MCF 10A (cell line): ENCODE measurements at regions of chr4 and their contacts with region 1.

Region 1: GRCh38 chr4:1910643-1911042 is 39.5 kb downstream of the NSD2 start:
- DNase-seq: peak; percentile 64
- H3K4me3 Mint-ChIP-seq: no peak overlapping the region
- H3K27ac Mint-ChIP-seq: peak overlapping the region; percentile 3
- H3K4me1 Mint-ChIP-seq: peaks cover 31% of the 10 kb centered on the region
- H3K27me3 Mint-ChIP-seq: no peaks in the 10 kb centered on the region
- CTCF ChIP-seq: peak; percentile 46

Region 2: GRCh38 chr4:1746265-1746691 is 164.4 kb before region 1 on chr4:
- CTCF ChIA-PET with region 1: interaction called, 7 read pairs
- POLR2A ChIA-PET with region 1: no interaction called
- intact Hi-C with region 1: loop called (anchors 2 kb)
- DNase-seq: peak; percentile 64
- H3K4me3 Mint-ChIP-seq: no peak overlapping the region
- H3K27ac Mint-ChIP-seq: no peak overlapping the region
- H3K4me1 Mint-ChIP-seq: no peaks in the 10 kb centered on the region
- H3K27me3 Mint-ChIP-seq: no peaks in the 10 kb centered on the region
- CTCF ChIP-seq: peak; percentile 86

Region 3: GRCh38 chr4:1856042-1856788 is 54.4 kb before region 1 on chr4 and contains the start of gene LETM1:
- CTCF ChIA-PET with region 1: interaction called, 4 read pairs
- POLR2A ChIA-PET with region 1: interaction called, 32 read pairs
- intact Hi-C with region 1: no loop called
- DNase-seq: peak; percentile 93
- H3K4me3 Mint-ChIP-seq: peak within 1 kb of the TSS; percentile 83
- H3K27ac Mint-ChIP-seq: peak within 1 kb of the TSS; percentile 79
- H3K4me1 Mint-ChIP-seq: peaks cover 26% of the 10 kb centered on the region
- H3K27me3 Mint-ChIP-seq: no peaks in the 10 kb centered on the region
- CTCF ChIP-seq: peak; percentile 8
- total RNA-seq, gene LETM1: 85.0 and 86.3 TPM in 2 replicates

Region 4: DNA sequence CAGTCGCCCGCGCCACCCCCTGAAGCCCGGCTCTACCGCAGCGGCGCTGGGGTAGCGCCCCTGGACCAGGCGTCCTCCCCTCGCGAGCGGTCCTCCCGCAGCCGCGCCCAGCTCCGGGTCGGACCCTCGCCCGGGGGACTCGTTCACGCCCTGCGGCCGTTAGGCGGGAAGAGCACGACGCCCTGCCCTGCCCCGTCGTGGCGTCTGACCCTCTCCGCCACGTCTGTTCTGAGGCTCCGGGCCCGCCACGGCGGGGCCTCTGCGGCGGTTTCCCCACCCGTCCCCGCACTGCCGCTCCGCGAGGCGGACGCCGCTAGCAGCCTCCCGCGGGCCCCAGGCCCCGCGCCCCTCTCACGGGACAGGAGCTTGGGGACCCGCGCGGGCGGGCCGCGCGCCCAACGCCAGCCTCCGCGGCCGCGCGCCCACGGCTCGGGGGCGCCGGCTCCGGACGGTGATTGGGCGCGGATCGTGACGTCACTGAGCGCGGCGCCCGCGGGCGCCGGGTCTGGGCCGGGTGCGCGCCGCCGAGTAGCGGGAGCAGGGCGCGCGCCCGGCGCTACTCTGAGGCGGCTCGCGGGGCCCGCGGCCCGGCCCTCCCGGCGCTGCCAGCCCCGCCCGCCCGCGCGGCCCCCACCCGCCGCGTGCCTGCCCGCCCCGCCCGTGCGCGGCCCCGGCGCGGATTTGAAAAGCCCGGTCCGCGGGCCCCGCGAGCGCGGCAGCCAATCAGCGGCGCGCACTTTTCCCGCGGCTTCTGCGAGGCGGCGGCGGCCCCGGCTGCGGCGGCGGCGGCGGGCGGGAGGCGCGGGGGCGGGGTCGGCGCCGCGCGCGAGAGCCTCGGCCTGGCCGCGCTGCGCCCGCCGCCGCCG is 39.8 kb before region 1 on chr4 and contains the start of gene NSD2:
- CTCF ChIA-PET with region 1: interaction called, 7 read pairs
- POLR2A ChIA-PET with region 1: interaction called, 11 read pairs
- intact Hi-C with region 1: no loop called
- DNase-seq: peak; percentile 82
- H3K4me3 Mint-ChIP-seq: peak within 1 kb of the TSS; percentile 88
- H3K27ac Mint-ChIP-seq: peak within 1 kb of the TSS; percentile 82
- H3K4me1 Mint-ChIP-seq: peaks cover 21% of the 10 kb centered on the region
- H3K27me3 Mint-ChIP-seq: no peaks in the 10 kb centered on the region
- CTCF ChIP-seq: no peak
- total RNA-seq, gene NSD2: 100 and 109 TPM in 2 replicates

Region 5: DNA sequence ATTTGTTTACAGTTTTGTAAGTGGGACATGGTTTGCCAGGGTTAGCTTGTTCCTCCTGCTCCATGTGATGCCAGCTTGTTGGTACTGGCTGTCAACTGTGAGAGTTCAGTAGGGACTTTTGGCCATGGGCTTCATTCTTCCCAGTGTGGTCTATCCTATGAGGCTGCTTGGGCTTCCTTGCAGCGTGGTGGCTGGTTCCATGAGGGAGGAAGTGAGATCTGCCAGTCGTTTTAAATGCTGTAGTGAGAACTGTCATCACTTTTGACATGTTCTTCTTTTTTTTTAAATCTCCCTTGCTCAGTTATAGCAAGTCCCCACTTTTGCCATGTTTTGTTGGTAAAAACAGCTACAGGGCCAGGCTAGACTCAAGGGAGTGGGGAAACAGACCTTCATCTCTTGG is 23.6 kb before region 1 on chr4:
- CTCF ChIA-PET with region 1: interaction called, 4 read pairs
- POLR2A ChIA-PET with region 1: interaction called, 10 read pairs
- intact Hi-C with region 1: no loop called
- DNase-seq: no peak
- H3K4me3 Mint-ChIP-seq: no peak overlapping the region
- H3K27ac Mint-ChIP-seq: peak overlapping the region; percentile 60
- H3K4me1 Mint-ChIP-seq: peaks cover 10% of the 10 kb centered on the region
- H3K27me3 Mint-ChIP-seq: no peaks in the 10 kb centered on the region
- CTCF ChIP-seq: no peak

Region 6: GRCh38 chr4:1922821-1923220 is 12.2 kb after region 1 on chr4:
- CTCF ChIA-PET with region 1: interaction called, 13 read pairs
- POLR2A ChIA-PET with region 1: interaction called, 4 read pairs
- intact Hi-C with region 1: no loop called
- DNase-seq: no peak
- H3K4me3 Mint-ChIP-seq: no peak overlapping the region
- H3K27ac Mint-ChIP-seq: no peak overlapping the region
- H3K4me1 Mint-ChIP-seq: no peaks in the 10 kb centered on the region
- H3K27me3 Mint-ChIP-seq: no peaks in the 10 kb centered on the region
- CTCF ChIP-seq: no peak

Region 7: GRCh38 chr4:1984406-1985191 is 74.0 kb after region 1 on chr4:
- CTCF ChIA-PET with region 1: no interaction called
- POLR2A ChIA-PET with region 1: no interaction called
- intact Hi-C with region 1: no loop called
- DNase-seq: no peak
- H3K4me3 Mint-ChIP-seq: no peak overlapping the region
- H3K27ac Mint-ChIP-seq: peak overlapping the region; percentile 36
- H3K4me1 Mint-ChIP-seq: peaks cover 9% of the 10 kb centered on the region
- H3K27me3 Mint-ChIP-seq: no peaks in the 10 kb centered on the region
- CTCF ChIP-seq: no peak

Region 8: GRCh38 chr4:2186133-2186864 is 275.7 kb after region 1 on chr4:
- CTCF ChIA-PET with region 1: interaction called, 8 read pairs
- POLR2A ChIA-PET with region 1: no interaction called
- intact Hi-C with region 1: loop called (anchors 1 kb)
- DNase-seq: peak; percentile 70
- H3K4me3 Mint-ChIP-seq: no peak overlapping the region
- H3K27ac Mint-ChIP-seq: no peak overlapping the region
- H3K4me1 Mint-ChIP-seq: no peaks in the 10 kb centered on the region
- H3K27me3 Mint-ChIP-seq: no peaks in the 10 kb centered on the region
- CTCF ChIP-seq: peak; percentile 81